Activated naive CD4-positive, alpha-beta T cell treated with anti-CD3 and anti-CD28 coated beads for 36 hours (primary cell): ENCODE measurements at regions of chr17 and their contacts with region 1.

Region 1: DNA sequence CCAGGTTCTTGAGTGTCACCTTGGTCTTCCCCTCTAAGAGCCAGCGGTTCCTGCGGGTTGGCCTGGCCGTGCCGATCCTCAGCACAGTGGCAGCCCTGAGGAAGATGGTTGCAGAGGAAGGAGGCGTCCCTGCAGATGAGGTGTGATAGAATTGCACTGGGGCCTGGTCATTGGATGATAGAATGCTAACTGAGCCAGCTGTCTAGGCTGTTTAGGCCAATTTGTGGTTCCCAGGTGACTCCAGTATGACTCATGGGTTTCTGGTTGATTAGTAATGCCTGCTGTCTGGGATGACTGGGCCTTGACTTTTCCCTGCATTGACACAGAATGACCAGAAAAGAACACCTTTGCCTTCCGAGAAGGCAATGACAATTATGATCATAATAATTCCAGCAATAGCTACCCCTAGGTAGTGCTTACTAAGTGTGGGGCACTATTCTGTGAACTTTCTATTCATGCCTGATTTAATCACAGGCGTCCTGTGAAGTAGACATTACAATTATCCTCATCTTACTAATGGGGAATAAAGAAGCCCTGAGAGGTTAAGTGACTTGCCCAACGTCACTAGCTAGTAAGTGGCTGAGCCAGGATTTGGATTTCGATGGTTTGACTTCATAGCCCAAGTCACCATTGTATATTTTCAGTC is 31.5 kb downstream of the USP43 start:
- DNase-seq: peak; percentile 35
- H3K4me3 Mint-ChIP-seq: no peak overlapping the region
- H3K27ac Mint-ChIP-seq: no peak overlapping the region
- H3K4me1 Mint-ChIP-seq: no peaks in the 10 kb centered on the region
- H3K27me3 Mint-ChIP-seq: peaks cover 8% of the 10 kb centered on the region

Region 2: DNA sequence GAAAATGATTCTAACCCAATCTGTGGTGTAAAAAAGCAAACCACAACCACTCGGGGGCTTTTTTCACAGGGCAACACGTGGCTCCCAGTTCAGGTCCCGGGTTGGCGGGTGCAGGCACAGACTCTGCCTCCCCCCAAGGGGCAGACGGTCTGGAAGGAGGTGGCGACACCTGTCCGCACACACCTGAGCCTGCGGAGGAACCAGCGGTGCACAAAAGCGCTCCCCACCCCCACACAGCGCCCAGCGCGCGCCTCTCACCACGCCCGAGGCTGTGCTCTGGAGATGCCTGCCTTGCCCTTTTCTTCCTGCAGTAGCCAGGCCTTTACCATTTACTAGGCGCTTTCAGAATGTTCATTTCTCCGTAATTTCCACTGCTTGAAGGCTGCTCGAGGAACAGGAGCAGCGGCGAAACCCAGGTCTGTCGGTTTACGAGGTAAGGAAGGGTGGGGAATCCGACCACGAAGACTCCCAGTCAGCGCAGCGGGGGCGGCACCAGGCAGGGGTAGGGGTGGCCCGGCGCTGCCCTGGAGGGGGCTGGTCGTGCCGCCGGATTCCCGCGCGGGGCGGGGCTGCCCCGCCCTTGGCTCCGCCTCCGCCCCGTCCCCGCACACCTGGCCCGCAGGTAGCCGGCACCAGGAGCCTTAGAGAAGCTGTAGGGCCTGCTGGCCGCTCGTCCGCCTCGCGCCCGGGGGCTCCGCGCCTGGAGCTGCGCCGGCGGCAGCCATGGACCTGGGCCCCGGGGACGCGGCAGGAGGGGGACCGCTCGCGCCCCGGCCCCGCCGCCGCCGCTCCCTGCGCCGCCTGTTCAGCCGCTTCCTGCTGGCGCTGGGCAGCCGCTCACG is 31.7 kb before region 1 on chr17 and contains the start of gene USP43:
- CTCF ChIA-PET with region 1: no interaction called
- intact Hi-C with region 1: loop called (anchors 2 kb)
- DNase-seq: peak; percentile 41
- H3K4me3 Mint-ChIP-seq: peak within 1 kb of the TSS; percentile 78
- H3K27ac Mint-ChIP-seq: no peak within 1 kb of the TSS
- H3K4me1 Mint-ChIP-seq: no peaks in the 10 kb centered on the region
- H3K27me3 Mint-ChIP-seq: peaks cover 51% of the 10 kb centered on the region
- total RNA-seq, gene USP43: 0.17 to 0.24 TPM